AG04449 (cell line): ENCODE measurements at regions of chr2 and their contacts with region 1.

Region 1: GRCh38 chr2:26959331-26959730 is 11.1 kb upstream of the MAPRE3 start:
- DNase-seq: no peak
- H3K4me3 ChIP-seq: no peak overlapping the region
- CTCF ChIP-seq: no peak

Region 2: DNA sequence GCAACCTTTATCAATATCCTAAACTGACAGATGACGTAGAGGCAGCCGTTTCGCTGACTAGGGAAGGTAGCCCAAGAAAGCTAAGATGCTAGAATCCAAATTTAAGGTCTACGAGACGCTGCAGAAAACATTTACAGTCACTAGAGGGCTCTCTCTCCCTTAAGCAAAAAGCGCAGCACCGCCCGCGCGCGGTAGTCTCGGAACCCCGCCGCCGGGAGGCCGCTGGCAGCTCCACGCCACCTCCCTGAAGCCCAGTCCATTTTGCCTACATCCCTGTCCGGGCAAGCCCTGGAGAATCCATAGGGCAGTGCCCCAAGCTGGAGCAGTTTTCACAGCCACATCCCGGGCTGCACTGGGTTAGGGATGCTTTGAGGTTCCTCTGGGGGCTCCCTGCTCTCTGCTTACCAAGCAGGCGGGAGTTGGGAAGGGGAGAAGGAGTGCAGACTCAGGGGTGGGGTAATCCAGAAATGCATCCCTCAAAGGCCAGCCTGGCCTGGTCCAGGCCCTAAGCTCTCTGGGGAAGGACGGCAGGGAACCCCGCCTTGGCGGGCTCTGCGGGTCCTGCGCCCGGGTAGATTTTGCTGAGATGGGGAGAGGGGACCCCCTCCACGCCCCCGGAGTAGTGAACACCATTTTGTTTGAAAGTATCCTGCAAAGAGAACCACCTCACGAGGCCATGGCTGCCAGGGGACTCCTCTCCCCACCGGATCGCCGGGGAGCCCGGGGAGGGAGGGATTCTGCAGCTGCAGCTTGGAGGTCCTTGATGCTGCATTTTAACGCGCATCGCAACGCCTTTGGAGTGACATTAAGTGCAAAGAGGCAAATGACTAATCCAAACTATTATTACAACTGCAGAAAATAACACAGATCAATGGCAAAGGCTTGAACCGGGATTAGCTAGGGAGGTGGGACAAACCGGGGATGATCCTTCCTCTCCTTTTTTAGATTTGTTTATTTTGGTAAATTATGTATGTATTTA is 112.7 kb before region 1 on chr2:
- CTCF ChIA-PET with region 1: interaction called, 15 read pairs
- POLR2A ChIA-PET with region 1: no interaction called
- DNase-seq: peak; percentile 3
- H3K4me3 ChIP-seq: no peak overlapping the region
- CTCF ChIP-seq: peak; percentile 76

Region 3: DNA sequence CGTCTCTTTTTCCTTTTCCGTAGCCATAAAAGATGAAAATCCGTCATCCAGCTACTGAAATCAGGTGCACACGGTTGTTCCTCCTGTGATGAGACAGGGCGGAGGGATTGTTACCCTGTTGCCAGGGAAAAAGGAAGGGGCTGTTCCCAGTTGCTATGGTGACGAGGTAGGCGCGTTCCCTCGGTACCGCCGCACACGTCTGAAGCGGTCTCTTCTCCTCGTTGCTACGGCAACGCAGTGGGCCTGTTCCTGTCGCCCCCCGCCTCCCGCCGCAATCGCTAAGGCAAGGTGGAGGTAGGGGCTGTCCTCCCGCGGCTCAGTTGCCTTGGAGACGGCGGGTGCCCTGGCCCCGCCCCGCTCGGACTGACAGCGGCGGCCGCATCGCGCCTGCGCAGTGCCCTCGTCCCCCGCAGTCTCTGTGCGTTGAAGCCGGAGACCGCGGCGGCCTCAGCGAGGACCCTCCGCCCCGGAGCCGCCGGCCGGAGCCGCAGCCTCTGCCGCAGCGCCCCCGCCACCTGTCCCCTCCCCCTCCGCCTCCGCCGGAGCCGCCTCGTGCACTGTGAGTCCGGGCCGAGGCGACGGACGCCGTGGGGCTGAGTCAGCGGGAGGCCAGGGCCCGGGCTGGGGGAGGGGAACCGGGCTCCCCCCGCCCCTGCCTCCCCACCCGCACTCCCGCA is 11.1 kb after region 1 on chr2 and contains the start of gene MAPRE3:
- CTCF ChIA-PET with region 1: interaction called, 27 read pairs
- POLR2A ChIA-PET with region 1: no interaction called
- DNase-seq: no peak
- H3K4me3 ChIP-seq: peak within 1 kb of the TSS; percentile 88
- CTCF ChIP-seq: no peak

Region 4: DNA sequence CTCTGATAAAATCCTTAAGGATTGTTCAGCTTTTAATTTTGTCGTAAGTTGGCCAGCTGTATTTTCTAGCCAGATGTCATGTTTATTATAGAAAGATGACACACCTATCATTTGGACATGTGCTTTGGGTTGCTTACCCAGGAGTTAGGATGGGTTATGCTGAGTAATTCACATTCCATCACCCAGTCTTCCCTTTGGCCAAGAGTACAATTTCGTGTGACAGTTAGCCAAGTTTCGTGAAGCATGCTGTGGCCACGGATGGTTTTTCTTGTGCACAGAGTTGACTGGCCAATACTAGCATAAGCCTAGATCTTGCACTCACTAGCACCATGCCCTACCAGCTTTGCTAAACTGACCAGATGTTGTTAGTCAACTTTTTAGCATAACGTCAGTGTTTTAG is 16.9 kb after region 1 on chr2:
- CTCF ChIA-PET with region 1: interaction called, 27 read pairs
- POLR2A ChIA-PET with region 1: no interaction called
- DNase-seq: no peak
- H3K4me3 ChIP-seq: no peak overlapping the region
- CTCF ChIP-seq: no peak

Region 5: DNA sequence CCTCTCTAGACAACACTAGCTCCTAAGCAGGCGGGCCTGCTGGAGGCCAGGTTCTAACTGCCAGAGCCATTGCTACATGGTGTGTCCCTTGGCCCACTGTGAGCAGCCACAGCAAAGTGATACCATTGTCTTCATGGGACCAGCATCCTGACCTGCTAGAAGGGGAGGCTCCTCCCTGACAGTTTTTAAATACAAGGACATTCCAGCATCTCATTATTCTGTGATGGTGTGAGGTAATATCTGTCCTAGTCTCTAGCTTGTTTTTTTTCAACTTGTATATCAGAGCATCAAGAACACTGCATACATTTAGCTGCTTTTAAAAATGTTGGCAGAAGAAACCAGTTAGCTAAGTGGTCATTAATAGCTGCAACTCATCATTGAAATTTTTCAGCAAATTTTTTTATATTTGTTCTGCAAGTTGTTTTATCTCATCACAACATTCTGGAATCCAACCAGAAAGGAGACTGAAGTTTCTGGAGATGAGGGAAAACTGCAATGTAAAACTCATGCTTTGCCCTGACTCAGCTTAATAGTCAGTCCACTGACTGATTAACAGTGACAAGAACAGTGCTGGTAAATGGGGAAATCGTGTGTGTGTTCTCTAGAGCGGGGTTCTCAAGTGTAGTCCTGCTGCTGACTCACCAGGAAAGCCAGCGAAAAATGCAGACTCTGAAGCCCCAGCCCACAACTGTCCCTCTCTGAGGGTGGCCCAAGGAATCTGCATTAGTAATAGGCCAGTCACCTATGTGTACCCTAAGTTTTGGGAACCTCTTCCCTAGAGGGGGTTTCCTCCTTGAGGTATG is 28.9 kb after region 1 on chr2:
- CTCF ChIA-PET with region 1: interaction called, 13 read pairs
- POLR2A ChIA-PET with region 1: no interaction called
- DNase-seq: peak; percentile 33
- H3K4me3 ChIP-seq: no peak overlapping the region
- CTCF ChIP-seq: no peak

Region 6: DNA sequence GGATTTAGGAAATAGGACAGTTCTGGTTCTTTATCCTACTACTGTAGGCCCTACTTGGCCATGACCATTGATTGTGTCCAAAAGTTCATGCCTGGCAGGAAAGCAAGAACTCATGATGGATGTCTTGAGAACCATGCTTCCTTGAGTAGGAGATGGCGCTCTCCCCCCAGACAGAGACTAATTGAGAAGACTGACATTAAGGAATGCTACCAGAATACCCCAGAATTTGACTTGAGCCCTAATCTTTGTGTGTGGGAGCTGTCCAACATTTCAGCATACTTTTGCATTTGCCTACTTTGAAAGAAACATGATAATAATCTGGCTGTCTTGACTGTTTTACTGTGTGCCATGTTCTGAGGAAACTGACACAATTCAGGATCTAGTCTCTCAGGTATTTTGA is 34.4 kb after region 1 on chr2:
- CTCF ChIA-PET with region 1: interaction called, 20 read pairs
- POLR2A ChIA-PET with region 1: no interaction called
- DNase-seq: no peak
- H3K4me3 ChIP-seq: no peak overlapping the region
- CTCF ChIP-seq: no peak

Region 7: GRCh38 chr2:27086090-27086723 is 126.9 kb after region 1 on chr2:
- CTCF ChIA-PET with region 1: interaction called, 73 read pairs
- POLR2A ChIA-PET with region 1: no interaction called
- DNase-seq: no peak
- H3K4me3 ChIP-seq: peak overlapping the region; percentile 42
- CTCF ChIP-seq: peak; percentile 94